ENCODE measurements at regions of chr22 and their contacts with region 1.

Region 1: GRCh38 chr22:40922484-40923303 is 28.5 kb upstream of the RBX1 start:
- DNase-seq: peak; percentile 83
- ATAC-seq: peak; percentile 94
- H3K4me3 ChIP-seq: peak overlapping the region in 2 of 5 experiments; percentile 12 to 47
- H3K4me3 Mint-ChIP-seq: peak overlapping the region; percentile 67
- H3K27ac ChIP-seq: no peak overlapping the region
- H3K27ac Mint-ChIP-seq: peak overlapping the region; percentile 32
- H3K4me1 ChIP-seq: peaks cover 4 to 5% of the 10 kb centered on the region in 2 donors
- H3K4me1 Mint-ChIP-seq: peaks cover 4% of the 10 kb centered on the region
- H3K27me3 ChIP-seq: no peaks in the 10 kb centered on the region
- H3K27me3 Mint-ChIP-seq: no peaks in the 10 kb centered on the region
- CTCF ChIP-seq: peak; percentile 87

Region 2: GRCh38 chr22:40856513-40857308 is 66.0 kb before region 1 on chr22 and contains the starts of genes ST13 and XPNPEP3:
- CTCF ChIA-PET with region 1: no interaction called
- POLR2A ChIA-PET with region 1: no interaction called
- intact Hi-C with region 1: no loop called
- DNase-seq: peak; percentile 98
- ATAC-seq: peak; percentile 88
- H3K4me3 ChIP-seq: peak within 1 kb of the TSS; percentile 82 to 98 (median 94)
- H3K4me3 Mint-ChIP-seq: peak within 1 kb of the TSS; percentile 97
- H3K27ac ChIP-seq: peak within 1 kb of the TSS; percentile 91 to 94
- H3K27ac Mint-ChIP-seq: peak within 1 kb of the TSS; percentile 100
- H3K4me1 ChIP-seq: peaks cover 24 to 28% of the 10 kb centered on the region in 2 donors
- H3K4me1 Mint-ChIP-seq: peaks cover 46% of the 10 kb centered on the region
- H3K27me3 ChIP-seq: no peaks in the 10 kb centered on the region
- H3K27me3 Mint-ChIP-seq: no peaks in the 10 kb centered on the region
- CTCF ChIP-seq: peak; percentile 71
- total RNA-seq, gene ST13: 175 and 187 TPM in 2 replicates
- total RNA-seq, gene XPNPEP3: 18.9 and 24.2 TPM in 2 replicates

Region 3: GRCh38 chr22:40939202-40939601 is 16.5 kb after region 1 on chr22:
- CTCF ChIA-PET with region 1: interaction called, 65 read pairs
- POLR2A ChIA-PET with region 1: interaction called, 6 read pairs
- intact Hi-C with region 1: loop called (anchors 2 kb)
- DNase-seq: no peak
- ATAC-seq: no peak
- H3K4me3 ChIP-seq: no peak overlapping the region
- H3K4me3 Mint-ChIP-seq: no peak overlapping the region
- H3K27ac ChIP-seq: no peak overlapping the region
- H3K27ac Mint-ChIP-seq: no peak overlapping the region
- H3K4me1 ChIP-seq: peaks cover 25 to 26% of the 10 kb centered on the region in 2 donors
- H3K4me1 Mint-ChIP-seq: peaks cover 36% of the 10 kb centered on the region
- H3K27me3 ChIP-seq: no peaks in the 10 kb centered on the region
- H3K27me3 Mint-ChIP-seq: no peaks in the 10 kb centered on the region
- CTCF ChIP-seq: no peak

Region 4: GRCh38 chr22:41022470-41023298 is 100.0 kb after region 1 on chr22:
- CTCF ChIA-PET with region 1: interaction called, 24 read pairs
- POLR2A ChIA-PET with region 1: interaction called, 8 read pairs
- intact Hi-C with region 1: loop called (anchors 1 kb)
- DNase-seq: peak; percentile 87
- ATAC-seq: peak; percentile 71
- H3K4me3 ChIP-seq: peak overlapping the region; percentile 11 to 96 (median 70)
- H3K4me3 Mint-ChIP-seq: peak overlapping the region; percentile 88
- H3K27ac ChIP-seq: peak overlapping the region; percentile 83 to 86
- H3K27ac Mint-ChIP-seq: peak overlapping the region; percentile 94
- H3K4me1 ChIP-seq: peaks cover 8 to 14% of the 10 kb centered on the region in 2 donors
- H3K4me1 Mint-ChIP-seq: peaks cover 12% of the 10 kb centered on the region
- H3K27me3 ChIP-seq: no peaks in the 10 kb centered on the region
- H3K27me3 Mint-ChIP-seq: no peaks in the 10 kb centered on the region
- CTCF ChIP-seq: no peak

Region 5: DNA sequence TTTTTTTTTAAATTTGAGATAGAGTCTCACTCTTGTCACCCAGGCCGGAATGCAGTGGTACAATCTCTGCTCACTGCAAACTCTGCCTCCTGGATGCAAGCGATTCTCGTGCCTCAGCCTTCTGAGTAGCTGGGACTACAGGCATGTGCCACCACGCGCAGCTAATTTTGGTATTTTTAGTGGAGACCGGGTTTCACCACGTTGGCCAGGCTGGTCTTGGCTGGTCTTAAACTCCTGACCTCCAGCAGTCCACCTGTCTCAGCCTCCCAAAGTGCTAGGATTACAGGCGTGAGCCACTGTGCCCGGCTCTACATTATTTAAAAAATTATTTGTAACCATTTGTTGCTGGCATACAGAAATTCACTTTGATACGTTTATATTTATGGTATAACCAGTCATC is 188.3 kb after region 1 on chr22:
- CTCF ChIA-PET with region 1: interaction called, 17 read pairs
- POLR2A ChIA-PET with region 1: no interaction called
- intact Hi-C with region 1: no loop called
- DNase-seq: no peak
- ATAC-seq: no peak
- H3K4me3 ChIP-seq: no peak overlapping the region
- H3K4me3 Mint-ChIP-seq: no peak overlapping the region
- H3K27ac ChIP-seq: no peak overlapping the region
- H3K27ac Mint-ChIP-seq: no peak overlapping the region
- H3K4me1 ChIP-seq: peaks cover 4 to 8% of the 10 kb centered on the region in 2 donors
- H3K4me1 Mint-ChIP-seq: peaks cover 38% of the 10 kb centered on the region
- H3K27me3 ChIP-seq: no peaks in the 10 kb centered on the region
- H3K27me3 Mint-ChIP-seq: no peaks in the 10 kb centered on the region
- CTCF ChIP-seq: no peak

Region 6: DNA sequence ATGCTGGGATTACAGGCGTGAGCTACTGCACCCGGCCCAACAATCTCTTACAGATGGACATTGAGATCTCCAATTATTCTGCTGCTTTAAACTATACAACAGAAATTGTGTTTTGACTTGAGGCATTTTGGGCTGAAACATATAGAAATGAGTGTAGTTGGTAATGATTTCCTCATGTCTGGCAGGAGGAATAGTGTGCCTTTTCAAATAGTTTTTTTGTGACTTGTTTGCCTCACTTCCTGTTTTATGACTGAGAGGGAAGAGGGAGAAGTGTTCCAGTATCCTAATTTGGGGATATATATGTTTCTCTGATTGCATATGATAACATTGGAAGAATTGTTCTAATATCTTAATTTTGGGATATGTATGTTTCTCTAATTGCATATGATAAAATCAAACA is 209.9 kb after region 1 on chr22:
- CTCF ChIA-PET with region 1: interaction called, 19 read pairs
- POLR2A ChIA-PET with region 1: interaction called, 3 read pairs
- intact Hi-C with region 1: no loop called
- DNase-seq: no peak
- ATAC-seq: no peak
- H3K4me3 ChIP-seq: no peak overlapping the region
- H3K4me3 Mint-ChIP-seq: no peak overlapping the region
- H3K27ac ChIP-seq: no peak overlapping the region
- H3K27ac Mint-ChIP-seq: no peak overlapping the region
- H3K4me1 ChIP-seq: no peaks in the 10 kb centered on the region
- H3K4me1 Mint-ChIP-seq: peaks cover 2% of the 10 kb centered on the region
- H3K27me3 ChIP-seq: no peaks in the 10 kb centered on the region
- H3K27me3 Mint-ChIP-seq: no peaks in the 10 kb centered on the region
- CTCF ChIP-seq: no peak

Region 7: DNA sequence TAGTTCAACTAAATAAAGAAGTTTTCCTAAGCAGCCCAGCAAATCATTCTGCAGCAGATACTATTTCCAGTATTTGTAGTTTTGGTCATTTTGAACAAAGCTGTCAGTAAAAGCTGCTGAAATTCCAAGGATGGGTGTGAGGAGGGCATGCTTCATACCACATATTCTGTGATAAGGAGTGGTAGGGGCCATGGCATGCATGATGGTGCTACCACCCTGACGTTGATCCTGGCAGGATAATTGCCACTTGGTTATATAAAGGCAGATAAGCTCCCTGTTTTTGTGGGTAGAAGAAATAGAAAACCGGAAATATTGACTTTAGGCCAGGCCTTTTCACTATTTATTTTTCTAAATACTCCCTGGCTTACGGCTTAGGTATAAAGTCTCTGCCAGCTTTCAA is 249.3 kb after region 1 on chr22:
- CTCF ChIA-PET with region 1: interaction called, 11 read pairs
- POLR2A ChIA-PET with region 1: no interaction called
- intact Hi-C with region 1: no loop called
- DNase-seq: no peak
- ATAC-seq: no peak
- H3K4me3 ChIP-seq: no peak overlapping the region
- H3K4me3 Mint-ChIP-seq: no peak overlapping the region
- H3K27ac ChIP-seq: no peak overlapping the region
- H3K27ac Mint-ChIP-seq: no peak overlapping the region
- H3K4me1 ChIP-seq: peaks cover 3 to 5% of the 10 kb centered on the region in 2 donors
- H3K4me1 Mint-ChIP-seq: peaks cover 13% of the 10 kb centered on the region
- H3K27me3 ChIP-seq: no peaks in the 10 kb centered on the region
- H3K27me3 Mint-ChIP-seq: no peaks in the 10 kb centered on the region
- CTCF ChIP-seq: no peak

Measured in B cell (primary cell).